Heart left ventricle (tissue), 16 donors: ENCODE measurements at regions of chr1 and their contacts with region 1.

Region 1: GRCh38 chr1:40232444-40232843 is 15.3 kb upstream of the TMCO2 start:
- DNase-seq: no peak
- ATAC-seq: no peak
- H3K4me3 ChIP-seq: no peak overlapping the region
- H3K27ac ChIP-seq: no peak overlapping the region
- H3K4me1 ChIP-seq: no peaks in the 10 kb centered on the region
- H3K27me3 ChIP-seq: no peaks in the 10 kb centered on the region
- CTCF ChIP-seq: no peak
- POLR2A ChIP-seq: no peak

Region 2: GRCh38 chr1:39525366-39526165 is 706.9 kb before region 1 on chr1:
- intact Hi-C with region 1: no loop called
- DNase-seq: peak in 1 of 5 donors; percentile 28
- ATAC-seq: peak in 3 of 4 donors; percentile 67 to 73 (median 71)
- H3K4me3 ChIP-seq: no peak overlapping the region
- H3K27ac ChIP-seq: peak overlapping the region in 7 of 12 donors; percentile 25 to 63 (median 42)
- H3K4me1 ChIP-seq: peaks cover 0 to 10% (median 0%) of the 10 kb centered on the region in 12 donors
- H3K27me3 ChIP-seq: no peaks in the 10 kb centered on the region
- CTCF ChIP-seq: no peak
- POLR2A ChIP-seq: no peak

Region 3: GRCh38 chr1:40014812-40015594 is 217.4 kb before region 1 on chr1:
- intact Hi-C with region 1: no loop called
- DNase-seq: no peak
- ATAC-seq: no peak
- H3K4me3 ChIP-seq: no peak overlapping the region
- H3K27ac ChIP-seq: no peak overlapping the region
- H3K4me1 ChIP-seq: peaks cover 0 to 8% (median 0%) of the 10 kb centered on the region in 12 donors
- H3K27me3 ChIP-seq: no peaks in the 10 kb centered on the region
- CTCF ChIP-seq: no peak
- POLR2A ChIP-seq: no peak

Region 4: DNA sequence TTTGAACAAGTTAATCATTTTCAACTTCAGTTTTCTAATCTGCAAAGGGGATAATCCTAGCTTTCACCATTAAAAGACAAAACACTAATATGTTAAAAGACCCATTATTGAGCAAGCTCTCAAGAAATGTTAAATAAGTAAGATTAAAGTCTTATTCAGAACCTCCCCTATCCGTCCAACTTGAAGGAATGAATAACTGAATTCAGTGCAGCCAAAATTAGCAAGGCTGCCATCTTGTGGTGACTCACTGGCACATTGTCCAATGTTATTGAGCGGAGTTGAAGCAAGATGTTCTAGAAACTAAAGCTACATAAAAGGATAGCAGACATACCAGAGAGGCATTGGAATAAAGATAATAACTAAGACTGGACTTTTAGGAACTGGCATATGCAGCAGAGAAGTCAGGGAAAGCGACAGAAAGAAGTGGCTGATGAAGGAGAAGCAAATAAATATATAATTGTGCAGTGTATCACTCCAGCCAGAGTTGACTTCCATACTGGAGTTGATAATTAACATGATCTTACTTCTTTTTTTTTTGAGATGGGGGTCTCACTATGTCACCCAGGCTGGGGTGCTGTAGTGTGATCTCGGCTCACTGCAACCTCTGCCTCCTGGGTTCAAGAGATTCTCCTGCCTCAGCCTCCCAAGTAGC is 200.1 kb before region 1 on chr1:
- intact Hi-C with region 1: no loop called
- DNase-seq: peak in 3 of 5 donors; percentile 41 to 55 (median 46)
- ATAC-seq: peak in 1 of 4 donors; percentile 26
- H3K4me3 ChIP-seq: no peak overlapping the region
- H3K27ac ChIP-seq: no peak overlapping the region
- H3K4me1 ChIP-seq: peaks cover 3 to 55% (median 21%) of the 10 kb centered on the region in 12 donors
- H3K27me3 ChIP-seq: no peaks in the 10 kb centered on the region
- CTCF ChIP-seq: peak; percentile 48 to 81 (median 65)
- POLR2A ChIP-seq: no peak

Region 5: GRCh38 chr1:40178200-40178599 is 54.2 kb before region 1 on chr1:
- intact Hi-C with region 1: no loop called
- DNase-seq: no peak
- ATAC-seq: no peak
- H3K4me3 ChIP-seq: no peak overlapping the region
- H3K27ac ChIP-seq: no peak overlapping the region
- H3K4me1 ChIP-seq: peaks cover 0 to 42% (median 17%) of the 10 kb centered on the region in 12 donors
- H3K27me3 ChIP-seq: no peaks in the 10 kb centered on the region
- CTCF ChIP-seq: no peak
- POLR2A ChIP-seq: no peak

Region 6: DNA sequence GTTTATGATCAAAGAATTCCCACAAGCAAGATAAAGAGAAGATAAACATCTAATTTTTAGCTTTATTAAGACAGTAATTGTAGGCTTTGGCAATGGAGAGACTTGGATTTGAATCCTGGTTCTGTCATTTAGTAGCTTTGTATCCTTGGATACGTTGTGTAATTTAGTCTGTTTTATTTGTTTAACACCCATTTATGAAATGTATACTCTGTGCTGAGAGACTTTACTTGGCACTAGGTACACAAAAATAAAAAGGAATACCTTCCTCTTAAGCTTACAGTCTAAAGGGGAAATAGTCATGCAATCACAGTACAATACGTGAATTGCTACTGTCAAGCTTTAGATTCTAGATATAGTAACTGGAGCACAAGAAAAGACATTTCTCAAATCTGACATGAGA is 49.4 kb after region 1 on chr1:
- intact Hi-C with region 1: loop called in 1 of 10 experiments (anchors 10 kb)
- DNase-seq: no peak
- ATAC-seq: no peak
- H3K4me3 ChIP-seq: no peak overlapping the region
- H3K27ac ChIP-seq: peak overlapping the region in 1 of 12 donors; percentile 24
- H3K4me1 ChIP-seq: no peaks in the 10 kb centered on the region
- H3K27me3 ChIP-seq: no peaks in the 10 kb centered on the region
- CTCF ChIP-seq: no peak
- POLR2A ChIP-seq: no peak